Gastrocnemius medialis (tissue), 4 donors: ENCODE measurements at regions of chr22 and their contacts with region 1.

Region 1: GRCh38 chr22:38114484-38115398 is 4.3 kb upstream of the BAIAP2L2 start:
- DNase-seq: peak; percentile 61 to 78
- ATAC-seq: peak; percentile 83 to 90
- H3K4me3 ChIP-seq: no peak overlapping the region
- H3K27ac ChIP-seq: no peak overlapping the region
- H3K4me1 ChIP-seq: peaks cover 2 to 7% of the 10 kb centered on the region in 2 donors
- H3K27me3 ChIP-seq: no peaks in the 10 kb centered on the region
- CTCF ChIP-seq: peak; percentile 75 to 96 (median 91)
- POLR2A ChIP-seq: no peak

Region 2: DNA sequence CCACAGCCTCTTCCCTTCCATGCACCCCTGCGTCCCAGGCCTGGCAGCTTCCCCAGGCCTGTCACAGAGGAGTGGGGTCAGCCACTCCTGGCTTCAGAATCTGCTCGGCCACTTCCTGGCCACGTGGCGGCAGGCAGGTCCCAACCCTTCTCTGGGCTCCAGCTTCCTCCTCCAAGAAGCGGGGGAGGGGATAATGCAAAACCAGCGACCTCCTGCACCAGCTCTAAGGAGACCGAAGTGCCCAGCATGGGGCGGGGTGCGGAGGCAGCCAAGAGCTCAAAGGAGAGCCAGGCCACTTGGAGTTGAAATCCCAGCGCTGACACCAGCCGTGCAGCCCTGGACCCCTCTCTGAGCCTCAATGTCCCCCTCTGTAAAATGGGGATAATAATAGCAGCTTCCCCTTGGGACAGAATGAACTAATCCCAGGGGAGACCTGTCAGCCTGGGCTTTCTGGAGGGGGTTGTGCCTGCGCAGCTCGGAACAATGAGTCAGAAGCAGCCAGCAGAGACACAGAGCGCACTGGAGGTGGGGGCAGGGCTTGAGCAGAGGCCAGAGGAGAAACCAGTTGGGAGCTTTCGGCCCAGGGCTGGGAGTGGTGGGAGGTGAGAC is 80.4 kb before region 1 on chr22:
- in situ Hi-C with region 1: no loop called
- intact Hi-C with region 1: no loop called
- DNase-seq: peak in 1 of 2 donors; percentile 40
- ATAC-seq: peak; percentile 46 to 57
- H3K4me3 ChIP-seq: no peak overlapping the region
- H3K27ac ChIP-seq: peak overlapping the region; percentile 10 to 57 (median 42)
- H3K4me1 ChIP-seq: peaks cover 8 to 16% of the 10 kb centered on the region in 2 donors
- H3K27me3 ChIP-seq: no peaks in the 10 kb centered on the region
- CTCF ChIP-seq: no peak
- POLR2A ChIP-seq: no peak

Region 3: GRCh38 chr22:38167988-38168431 is 53.3 kb after region 1 on chr22:
- in situ Hi-C with region 1: loop called in 1 of 4 experiments (anchors 10 kb)
- intact Hi-C with region 1: no loop called
- DNase-seq: peak; percentile 59 to 73
- ATAC-seq: peak; percentile 52 to 62
- H3K4me3 ChIP-seq: peak overlapping the region in 1 of 4 donors; percentile 6
- H3K27ac ChIP-seq: peak overlapping the region; percentile 74 to 97 (median 92)
- H3K4me1 ChIP-seq: peaks cover 37 to 49% of the 10 kb centered on the region in 2 donors
- H3K27me3 ChIP-seq: no peaks in the 10 kb centered on the region
- CTCF ChIP-seq: no peak
- POLR2A ChIP-seq: peak in 1 of 2 donors; percentile 57

Region 4: GRCh38 chr22:38230108-38230825 is 115.5 kb after region 1 on chr22:
- in situ Hi-C with region 1: loop called in 2 of 4 experiments (anchors 10 to 25 kb)
- intact Hi-C with region 1: loop called (anchors 5 kb)
- DNase-seq: no peak
- ATAC-seq: peak in 1 of 2 donors; percentile 16
- H3K4me3 ChIP-seq: no peak overlapping the region
- H3K27ac ChIP-seq: peak overlapping the region; percentile 5 to 66 (median 60)
- H3K4me1 ChIP-seq: peaks cover 28 to 38% of the 10 kb centered on the region in 2 donors
- H3K27me3 ChIP-seq: no peaks in the 10 kb centered on the region
- CTCF ChIP-seq: peak in 3 of 5 experiments; percentile 29 to 34 (median 31)
- POLR2A ChIP-seq: no peak

Region 5: DNA sequence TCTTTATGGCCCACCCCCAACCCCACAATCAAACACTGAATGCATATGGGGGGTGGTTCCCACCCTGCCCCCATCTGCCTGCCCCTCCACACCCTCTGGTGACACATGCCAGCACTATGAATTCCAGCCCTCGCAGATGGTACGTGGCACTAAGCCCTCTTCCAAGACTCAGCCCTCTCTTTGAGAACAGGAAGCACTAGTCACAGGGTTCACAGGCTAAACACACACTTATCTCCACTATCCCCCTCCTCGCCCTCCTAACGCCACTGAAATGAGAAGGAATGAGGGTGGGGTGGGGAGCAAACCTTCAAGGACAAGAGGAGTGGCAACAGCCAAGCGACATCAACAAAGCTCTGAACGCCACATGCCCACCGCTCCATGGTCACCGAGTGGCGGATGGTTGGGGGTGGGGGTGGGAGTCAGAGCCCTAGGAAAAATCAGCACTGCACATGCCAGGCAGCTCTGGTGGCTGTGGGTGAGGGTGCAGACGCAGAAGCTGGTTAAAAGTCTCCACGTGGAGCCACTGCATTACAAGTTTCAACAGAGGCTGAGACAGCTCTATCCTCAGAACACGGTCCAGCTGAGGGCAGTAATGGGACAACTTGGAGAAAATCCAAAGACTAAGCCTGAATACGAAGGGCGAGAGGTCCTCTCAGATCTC is 124.5 kb after region 1 on chr22:
- in situ Hi-C with region 1: loop called in 2 of 4 experiments (anchors 10 to 25 kb)
- intact Hi-C with region 1: loop called (anchors 5 kb)
- DNase-seq: peak in 1 of 2 donors; percentile 57
- ATAC-seq: peak; percentile 69 to 80
- H3K4me3 ChIP-seq: peak overlapping the region in 1 of 4 donors; percentile 15
- H3K27ac ChIP-seq: peak overlapping the region; percentile 20 to 61 (median 46)
- H3K4me1 ChIP-seq: peaks cover 47 to 57% of the 10 kb centered on the region in 2 donors
- H3K27me3 ChIP-seq: no peaks in the 10 kb centered on the region
- CTCF ChIP-seq: peak in 2 of 5 experiments; percentile 11 to 32
- POLR2A ChIP-seq: no peak